SK-N-SH (cell line): ENCODE measurements at regions of chr1 and their contacts with region 1.

Region 1: GRCh38 chr1:92994105-92994712 is 32.9 kb upstream of the DIPK1A start:
- DNase-seq: peak; percentile 59
- H3K4me3 ChIP-seq: no peak overlapping the region; a peak in 1 of 4 replicates
- H3K27ac ChIP-seq: no peak overlapping the region
- H3K4me1 ChIP-seq: no peaks in the 10 kb centered on the region; a peak in 1 of 4 replicates
- H3K27me3 ChIP-seq: no peaks in the 10 kb centered on the region
- CTCF ChIP-seq: peak; percentile 85
- EP300 ChIP-seq: no peak
- RAD21 ChIP-seq: peak; percentile 95

Region 2: DNA sequence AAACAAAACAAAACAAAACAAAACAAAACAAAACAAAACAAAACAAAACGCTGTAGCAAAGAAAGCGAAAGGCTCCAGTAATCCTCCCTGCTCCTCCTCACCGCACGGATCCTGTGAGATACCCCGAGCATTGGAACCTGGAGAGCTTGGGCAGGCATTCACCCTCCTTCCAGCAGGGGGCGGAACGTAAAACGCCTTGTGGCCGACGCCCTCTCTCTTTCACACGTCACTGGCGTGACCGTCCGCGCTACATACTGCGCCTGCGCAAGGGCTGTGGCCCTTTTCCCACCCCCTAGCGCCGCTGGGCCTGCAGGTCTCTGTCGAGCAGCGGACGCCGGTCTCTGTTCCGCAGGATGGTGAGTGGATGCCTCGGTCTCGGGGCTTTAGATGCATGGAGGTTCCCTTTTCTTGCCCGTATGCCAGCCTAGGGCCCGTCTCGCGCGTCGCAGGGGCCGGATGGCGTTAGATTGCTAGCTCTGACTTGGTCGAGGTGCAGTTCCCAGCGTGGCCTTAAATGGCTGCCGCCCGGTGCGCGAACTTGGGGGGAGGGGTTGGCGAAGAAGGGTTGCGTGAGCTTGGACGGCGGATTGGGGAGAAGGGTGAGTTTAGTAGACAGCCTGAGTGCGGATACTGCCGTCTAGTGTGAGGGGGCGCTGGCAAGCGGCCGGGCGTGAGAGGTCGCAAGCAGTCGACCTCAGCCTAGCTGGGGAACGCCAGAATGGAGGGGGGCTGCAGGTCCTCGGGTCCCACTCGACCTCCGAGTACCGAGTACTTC is 162.3 kb before region 1 on chr1 and contains the start of gene RPL5:
- CTCF ChIA-PET with region 1: interaction called, 10 read pairs
- POLR2A ChIA-PET with region 1: no interaction called
- DNase-seq: peak; percentile 95
- H3K4me3 ChIP-seq: peak within 1 kb of the TSS; percentile 94 to 99
- H3K27ac ChIP-seq: peak within 1 kb of the TSS; percentile 74 to 97
- H3K4me1 ChIP-seq: peaks cover 15 to 35% of the 10 kb centered on the region in 2 experiments; a peak in 3 of 4 replicates
- H3K27me3 ChIP-seq: no peaks in the 10 kb centered on the region
- CTCF ChIP-seq: peak; percentile 93
- EP300 ChIP-seq: no peak
- RAD21 ChIP-seq: peak; percentile 27; the same call in 1 of the 2 replicates
- polyA plus RNA-seq, gene RPL5: 1,489 and 2,038 TPM in 2 replicates

Region 3: DNA sequence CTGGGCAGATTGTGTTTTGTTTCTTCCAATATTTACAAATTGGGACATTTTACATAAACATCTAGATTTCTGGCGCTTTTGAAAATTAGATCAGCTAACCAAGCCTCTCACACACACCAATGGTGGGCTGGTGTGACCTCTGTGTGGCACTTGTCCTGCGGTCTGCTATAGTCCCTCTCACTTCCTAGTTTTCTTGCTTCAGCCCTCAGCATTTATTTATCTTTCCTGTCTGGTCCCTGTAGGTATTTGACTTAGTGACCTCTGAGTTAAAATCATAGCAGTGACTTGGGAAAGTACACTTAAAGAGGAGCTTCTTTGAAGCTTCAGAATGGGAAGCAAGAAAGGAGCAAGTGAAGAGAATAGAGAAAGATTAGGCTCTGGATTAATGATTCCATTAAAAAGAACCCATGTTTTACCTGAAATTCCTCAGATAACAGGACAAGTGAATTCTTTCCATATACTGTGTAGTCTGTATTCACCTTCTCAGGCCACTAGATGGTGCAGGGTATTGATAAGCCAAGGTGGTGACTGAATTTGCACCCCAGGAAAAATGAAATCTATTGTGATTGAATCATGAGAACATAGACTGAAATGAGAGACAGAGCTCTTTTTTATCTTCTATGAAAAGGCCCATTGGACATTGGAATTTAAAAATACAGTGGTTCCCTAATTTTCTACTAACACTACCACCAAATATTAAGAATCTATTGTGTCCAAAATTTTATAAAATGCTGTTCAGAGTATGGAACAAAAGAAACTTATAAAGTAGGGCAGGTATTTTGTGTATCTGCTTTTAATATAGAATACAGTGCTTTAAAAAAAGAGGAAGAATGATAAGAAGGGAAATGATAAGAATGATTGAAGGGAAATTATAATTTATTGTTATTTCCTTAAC is 25.8 kb before region 1 on chr1:
- CTCF ChIA-PET with region 1: interaction called, 37 read pairs
- POLR2A ChIA-PET with region 1: no interaction called
- DNase-seq: peak; percentile 38
- H3K4me3 ChIP-seq: no peak overlapping the region; a peak in 1 of 4 replicates
- H3K27ac ChIP-seq: no peak overlapping the region
- H3K4me1 ChIP-seq: no peaks in the 10 kb centered on the region; a peak in 1 of 4 replicates
- H3K27me3 ChIP-seq: no peaks in the 10 kb centered on the region; the same call in 1 of the 2 replicates
- CTCF ChIP-seq: peak; percentile 59
- EP300 ChIP-seq: no peak
- RAD21 ChIP-seq: peak; percentile 56

Region 4: GRCh38 chr1:92980732-92981647 is 13.2 kb before region 1 on chr1:
- CTCF ChIA-PET with region 1: interaction called, 27 read pairs
- POLR2A ChIA-PET with region 1: no interaction called
- DNase-seq: no peak
- H3K4me3 ChIP-seq: no peak overlapping the region
- H3K27ac ChIP-seq: no peak overlapping the region
- H3K4me1 ChIP-seq: no peaks in the 10 kb centered on the region
- H3K27me3 ChIP-seq: no peaks in the 10 kb centered on the region
- CTCF ChIP-seq: no peak
- EP300 ChIP-seq: no peak
- RAD21 ChIP-seq: no peak

Region 5: DNA sequence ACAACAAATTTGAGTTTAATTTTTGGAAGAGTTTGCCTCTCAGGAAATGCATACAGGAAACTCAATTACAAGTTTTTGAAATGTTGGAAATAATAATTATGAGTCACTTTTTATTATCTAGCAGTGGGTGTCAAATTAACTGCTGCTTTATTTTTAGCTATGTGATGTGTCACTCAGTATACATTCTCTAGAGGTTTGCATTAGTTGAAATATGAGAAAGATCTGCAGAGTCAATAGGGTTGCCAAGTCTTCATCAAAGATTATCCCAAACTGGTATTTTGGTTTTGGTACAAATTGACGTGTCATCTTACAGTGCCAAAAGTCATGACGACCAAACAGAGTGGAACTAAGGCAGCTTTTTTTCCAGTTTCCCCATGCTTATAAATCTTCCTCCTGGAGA is 21.4 kb after region 1 on chr1:
- CTCF ChIA-PET with region 1: interaction called, 15 read pairs
- POLR2A ChIA-PET with region 1: no interaction called
- DNase-seq: no peak
- H3K4me3 ChIP-seq: no peak overlapping the region
- H3K27ac ChIP-seq: peak overlapping the region in 1 of 2 experiments; percentile 18; a peak in 1 of 4 replicates
- H3K4me1 ChIP-seq: peaks cover 0 to 33% of the 10 kb centered on the region in 2 experiments; a peak in 2 of 4 replicates
- H3K27me3 ChIP-seq: peaks cover 16% of the 10 kb centered on the region; the same call in 1 of the 2 replicates
- CTCF ChIP-seq: no peak
- EP300 ChIP-seq: no peak
- RAD21 ChIP-seq: no peak

Region 6: GRCh38 chr1:93036672-93037071 is 42.5 kb after region 1 on chr1:
- CTCF ChIA-PET with region 1: no interaction called
- POLR2A ChIA-PET with region 1: no interaction called
- DNase-seq: no peak
- H3K4me3 ChIP-seq: no peak overlapping the region
- H3K27ac ChIP-seq: no peak overlapping the region
- H3K4me1 ChIP-seq: no peaks in the 10 kb centered on the region
- H3K27me3 ChIP-seq: no peaks in the 10 kb centered on the region
- CTCF ChIP-seq: no peak
- EP300 ChIP-seq: no peak
- RAD21 ChIP-seq: no peak

Region 7: DNA sequence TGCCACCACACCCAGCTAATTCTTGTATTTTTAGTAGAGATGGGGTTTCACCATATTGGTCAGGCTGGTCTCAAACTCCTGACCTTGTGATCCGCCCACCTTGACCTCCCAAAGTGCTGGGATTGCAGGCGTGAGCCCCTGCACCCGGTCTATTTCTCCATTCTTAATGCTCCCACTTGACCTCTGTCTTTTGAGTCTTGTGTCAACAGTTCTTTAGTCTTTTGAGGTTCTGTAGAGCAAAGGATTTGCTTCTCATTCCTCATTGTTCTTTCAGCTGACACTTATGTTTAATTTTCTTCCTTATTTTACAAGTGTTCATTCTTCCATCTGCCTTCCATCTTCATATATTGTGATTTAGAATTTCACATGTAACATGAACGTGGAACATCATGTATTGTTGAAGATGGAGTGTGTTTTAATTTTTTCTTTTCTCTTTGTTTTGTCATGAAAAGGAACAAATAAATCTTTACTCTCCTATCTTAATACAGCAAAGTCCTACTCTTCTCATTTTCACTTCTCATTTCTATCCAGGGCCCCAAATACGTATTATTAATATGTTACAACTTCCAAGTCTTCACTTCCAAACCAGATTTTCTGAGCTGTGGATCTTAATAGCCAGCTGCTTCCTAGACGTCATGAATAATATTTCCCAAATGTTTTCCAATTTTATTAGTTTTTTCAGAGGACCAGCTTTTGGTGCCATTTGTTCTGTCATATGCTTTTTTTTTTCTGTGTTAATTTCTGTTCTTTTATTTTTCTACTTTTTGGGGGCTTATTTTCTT is 101.8 kb after region 1 on chr1:
- CTCF ChIA-PET with region 1: no interaction called
- POLR2A ChIA-PET with region 1: no interaction called
- DNase-seq: no peak
- H3K4me3 ChIP-seq: no peak overlapping the region
- H3K27ac ChIP-seq: no peak overlapping the region
- H3K4me1 ChIP-seq: no peaks in the 10 kb centered on the region; a peak in 1 of 4 replicates
- H3K27me3 ChIP-seq: no peaks in the 10 kb centered on the region
- CTCF ChIP-seq: no peak
- EP300 ChIP-seq: no peak
- RAD21 ChIP-seq: no peak

Region 8: DNA sequence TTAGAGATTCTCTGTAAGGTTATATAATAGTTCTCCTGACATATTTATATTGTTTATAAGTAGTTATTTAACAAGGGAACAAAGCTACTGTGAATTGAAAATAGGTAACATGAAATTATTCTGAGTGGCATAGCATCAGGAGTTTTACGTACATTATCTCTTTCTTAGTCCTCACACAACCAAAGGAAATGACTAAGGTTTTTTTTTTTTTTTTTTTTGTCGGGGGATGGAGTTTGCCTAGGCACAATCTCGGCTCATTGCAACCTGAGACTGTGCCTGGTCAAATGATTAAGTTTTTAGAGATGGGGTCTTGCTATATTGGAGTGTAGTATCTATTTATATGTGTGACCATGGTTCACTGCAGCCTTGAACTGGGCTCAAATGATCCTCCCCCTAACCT is 161.1 kb after region 1 on chr1:
- CTCF ChIA-PET with region 1: no interaction called
- POLR2A ChIA-PET with region 1: no interaction called
- DNase-seq: no peak
- H3K4me3 ChIP-seq: no peak overlapping the region
- H3K27ac ChIP-seq: 0 out of 4 replicates have a peak overlapping the region, but pooled peaks of 1 of the 2 experiments have one; percentile 2
- H3K4me1 ChIP-seq: no peaks in the 10 kb centered on the region
- H3K27me3 ChIP-seq: no peaks in the 10 kb centered on the region
- CTCF ChIP-seq: no peak
- EP300 ChIP-seq: no peak
- RAD21 ChIP-seq: no peak